ENCODE measurements at regions of chr3 and their contacts with region 1.

Region 1: GRCh38 chr3:98884675-98885371 is 16.7 kb downstream of the DCBLD2 start:
- DNase-seq: no peak
- H3K4me3 ChIP-seq: no peak overlapping the region
- H3K27ac ChIP-seq: peak overlapping the region in 1 of 5 donors; percentile 11
- H3K4me1 ChIP-seq: peaks cover 27 to 30% of the 10 kb centered on the region in 2 donors
- H3K27me3 ChIP-seq: no peaks in the 10 kb centered on the region
- CTCF ChIP-seq: no peak
- POLR2A ChIP-seq: no peak

Region 2: GRCh38 chr3:98824256-98824655 is 60.6 kb before region 1 on chr3:
- intact Hi-C with region 1: loop called in 1 of 2 experiments (anchors 10 kb)
- DNase-seq: no peak
- H3K4me3 ChIP-seq: no peak overlapping the region
- H3K27ac ChIP-seq: no peak overlapping the region
- H3K4me1 ChIP-seq: no peaks in the 10 kb centered on the region
- H3K27me3 ChIP-seq: no peaks in the 10 kb centered on the region
- CTCF ChIP-seq: peak in 1 of 6 experiments; percentile 13
- POLR2A ChIP-seq: no peak

Region 3: GRCh38 chr3:99012051-99012450 is 127.2 kb after region 1 on chr3:
- intact Hi-C with region 1: no loop called
- DNase-seq: peak in 2 of 7 donors; percentile 8 to 16
- H3K4me3 ChIP-seq: no peak overlapping the region
- H3K27ac ChIP-seq: no peak overlapping the region
- H3K4me1 ChIP-seq: no peaks in the 10 kb centered on the region
- H3K27me3 ChIP-seq: no peaks in the 10 kb centered on the region
- CTCF ChIP-seq: no peak
- POLR2A ChIP-seq: no peak